ENCODE measurements at regions of chr9 and their contacts with region 1.

Region 1: DNA sequence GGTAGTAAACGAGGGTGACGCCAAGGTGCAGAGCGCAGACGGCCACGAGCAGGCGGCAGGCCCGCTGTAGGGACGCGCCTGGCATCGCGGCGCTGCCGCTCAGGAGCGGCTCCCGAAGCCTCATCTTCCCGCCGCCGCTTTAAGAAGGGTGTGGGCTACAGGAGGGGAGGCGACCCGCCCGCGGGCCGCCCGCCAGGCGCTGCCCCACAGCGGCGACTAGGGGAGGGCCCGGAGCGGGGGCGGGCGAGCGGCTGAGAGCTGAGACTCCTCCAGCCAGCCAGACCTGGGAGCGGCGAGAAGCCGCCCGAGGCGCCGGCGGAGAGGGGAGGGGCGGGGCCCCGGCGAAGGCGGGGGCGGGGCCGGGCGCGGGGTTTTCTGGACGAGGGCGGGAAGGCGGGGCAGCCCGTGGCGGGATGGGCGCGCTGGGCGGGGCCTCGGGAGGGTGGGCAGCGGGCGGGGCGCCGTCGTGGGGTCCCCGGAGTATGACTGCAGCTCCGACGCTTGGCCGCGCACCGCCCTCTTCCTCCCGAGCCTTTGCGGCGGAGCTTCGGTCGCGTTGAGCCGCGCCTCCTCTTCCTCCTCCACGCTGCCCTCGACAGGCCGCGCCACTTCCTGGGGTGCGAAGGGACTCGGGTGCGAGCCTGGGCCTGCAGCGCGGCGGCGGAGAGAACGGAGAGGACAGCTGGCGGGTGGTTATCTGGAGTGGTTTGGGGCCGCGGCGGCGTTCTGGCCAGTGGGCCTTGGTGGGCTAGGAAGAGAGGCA is at the start of gene B4GALT1:
- DNase-seq: peak; percentile 90 to 96 (median 95)
- H3K4me3 ChIP-seq: peak within 1 kb of the TSS; percentile 64 to 91 (median 75)
- H3K27ac ChIP-seq: peak within 1 kb of the TSS; percentile 64 to 89
- H3K4me1 ChIP-seq: peaks cover 23 to 61% (median 52%) of the 10 kb centered on the region in 4 experiments
- H3K27me3 ChIP-seq: no peaks in the 10 kb centered on the region

Region 2: DNA sequence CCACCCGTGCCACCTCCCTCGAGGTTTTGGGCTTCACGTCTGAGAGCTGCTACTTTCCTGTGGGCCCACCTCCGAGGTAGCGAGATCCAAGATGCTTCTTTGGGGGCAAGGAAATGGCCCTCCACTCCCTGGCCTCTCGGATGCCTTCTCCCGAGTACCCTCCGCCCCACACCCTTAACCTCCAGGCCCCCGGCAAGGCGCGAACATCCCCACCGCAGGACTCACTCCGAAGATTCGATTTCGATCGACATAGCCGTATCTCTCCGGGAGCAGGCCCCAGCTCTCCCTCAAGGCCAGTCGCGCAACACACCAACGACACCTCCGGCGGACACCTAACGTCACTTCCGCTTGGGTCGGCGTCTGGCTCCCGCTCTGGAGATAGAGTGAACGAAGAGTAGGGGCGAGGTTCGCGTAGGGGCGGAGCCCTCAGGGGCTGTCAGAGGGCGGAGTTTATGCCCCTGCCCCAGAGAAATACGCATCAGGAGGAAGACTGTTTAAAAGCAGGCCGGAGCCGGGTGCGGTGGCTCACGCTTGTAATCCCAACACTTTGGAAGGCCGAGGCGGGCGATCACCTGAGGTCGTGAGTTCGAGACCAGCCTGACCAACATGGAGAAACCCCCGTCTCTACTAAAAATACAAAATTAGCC is 90.7 kb before region 1 on chr9 and contains the start of gene SMU1:
- CTCF ChIA-PET with region 1: interaction called, 18 read pairs
- POLR2A ChIA-PET with region 1: interaction called, 8 read pairs
- DNase-seq: peak; percentile 98 to 99 (median 99)
- H3K4me3 ChIP-seq: peak within 1 kb of the TSS; percentile 72 to 99 (median 93)
- H3K27ac ChIP-seq: peak within 1 kb of the TSS; percentile 96 to 99
- H3K4me1 ChIP-seq: peaks cover 18 to 28% (median 24%) of the 10 kb centered on the region in 4 experiments
- H3K27me3 ChIP-seq: no peaks in the 10 kb centered on the region

Region 3: DNA sequence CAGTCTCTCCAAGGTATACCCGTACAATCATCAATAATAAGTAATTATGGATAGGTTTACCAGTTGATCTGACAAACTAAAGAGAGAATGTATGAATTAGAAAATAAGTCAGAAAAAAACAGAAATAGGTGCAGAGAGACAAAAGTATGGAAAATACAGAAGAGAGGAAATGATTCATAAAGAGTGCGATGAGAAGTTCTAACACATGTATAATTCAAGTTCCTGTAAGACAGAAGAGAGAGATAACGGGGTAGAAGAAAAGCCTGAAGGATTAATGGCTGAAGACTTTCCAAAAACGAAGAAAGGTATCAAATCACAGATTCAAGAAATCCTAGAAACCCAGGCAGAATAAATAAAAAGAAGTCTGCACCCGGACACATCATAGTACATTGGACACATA is 74.6 kb before region 1 on chr9:
- CTCF ChIA-PET with region 1: no interaction called
- POLR2A ChIA-PET with region 1: no interaction called
- DNase-seq: no peak
- H3K4me3 ChIP-seq: no peak overlapping the region
- H3K27ac ChIP-seq: no peak overlapping the region
- H3K4me1 ChIP-seq: no peaks in the 10 kb centered on the region
- H3K27me3 ChIP-seq: no peaks in the 10 kb centered on the region

Region 4: DNA sequence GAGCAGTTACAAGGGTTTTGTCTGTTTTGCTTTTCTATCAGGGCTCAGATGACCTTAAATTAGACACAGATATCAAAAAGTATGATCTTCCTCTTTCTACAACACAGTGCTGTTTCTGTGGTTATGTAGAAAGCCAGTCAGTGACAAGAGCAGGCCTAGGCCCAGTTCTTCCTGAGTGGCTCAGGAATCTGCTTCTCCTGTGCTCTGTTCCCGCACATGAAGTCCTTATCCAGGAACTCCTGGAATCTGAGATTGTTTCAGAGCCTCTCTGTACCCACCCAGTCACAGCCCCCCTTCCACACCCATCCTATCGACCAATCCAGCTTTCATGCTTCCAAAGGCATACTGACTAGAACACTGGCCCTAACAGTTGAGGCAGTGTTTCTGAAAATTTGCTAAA is 50.4 kb before region 1 on chr9:
- CTCF ChIA-PET with region 1: interaction called, 12 read pairs
- POLR2A ChIA-PET with region 1: no interaction called
- DNase-seq: peak in 2 of 3 donors; percentile 28 to 40
- H3K4me3 ChIP-seq: no peak overlapping the region
- H3K27ac ChIP-seq: peak overlapping the region in 1 of 2 experiments; percentile 64
- H3K4me1 ChIP-seq: peaks cover 4 to 22% (median 21%) of the 10 kb centered on the region in 4 experiments
- H3K27me3 ChIP-seq: no peaks in the 10 kb centered on the region

Region 5: DNA sequence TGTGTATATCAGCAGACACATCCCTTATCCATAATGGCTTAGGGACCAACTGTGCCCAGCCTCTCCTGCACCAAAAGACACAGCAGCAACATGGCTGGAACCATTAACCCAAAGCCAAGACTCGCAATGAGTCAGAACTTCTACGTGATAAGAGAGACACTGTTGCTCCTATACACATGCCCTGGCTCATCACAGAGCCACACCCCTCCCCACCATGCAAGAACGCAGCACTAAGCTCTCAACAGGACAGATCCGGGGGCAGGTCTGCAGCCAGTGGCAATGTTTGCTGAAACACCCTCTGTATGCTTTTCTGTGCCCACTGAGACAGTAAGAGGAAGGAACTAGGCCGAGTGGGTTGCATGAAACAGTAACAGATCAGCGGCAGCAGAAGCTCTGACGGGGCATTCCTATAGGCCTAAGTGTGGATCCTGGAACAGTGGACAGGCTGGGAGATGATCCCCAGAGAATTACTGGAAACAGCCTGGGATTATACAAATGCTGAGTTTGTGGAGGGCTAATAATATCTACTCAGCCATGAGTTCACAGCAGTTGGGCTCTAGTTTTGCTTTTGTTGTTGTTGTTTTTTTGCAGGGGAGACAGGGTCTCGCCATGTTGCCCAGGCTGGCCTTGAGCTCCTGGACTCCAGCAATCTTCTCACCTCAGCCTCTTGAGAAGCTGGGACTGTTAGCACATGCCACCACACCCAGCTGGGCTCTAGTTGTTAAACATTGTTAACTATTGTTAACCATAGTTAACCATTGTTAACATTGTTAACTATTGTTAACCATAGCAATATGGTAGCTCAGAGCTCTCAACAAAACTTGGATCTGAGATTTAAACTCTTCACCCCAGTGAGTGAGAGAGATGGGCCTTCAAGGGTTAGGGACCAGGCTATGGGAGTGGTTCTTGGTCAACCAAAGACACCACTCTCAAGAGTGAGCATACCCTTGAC is 41.1 kb before region 1 on chr9:
- CTCF ChIA-PET with region 1: interaction called, 14 read pairs
- POLR2A ChIA-PET with region 1: no interaction called
- DNase-seq: peak; percentile 45 to 76 (median 67)
- H3K4me3 ChIP-seq: peak overlapping the region in 1 of 7 experiments; percentile 41
- H3K27ac ChIP-seq: peak overlapping the region in 1 of 2 experiments; percentile 5
- H3K4me1 ChIP-seq: peaks cover 11 to 37% (median 26%) of the 10 kb centered on the region in 4 experiments
- H3K27me3 ChIP-seq: no peaks in the 10 kb centered on the region

Region 6: GRCh38 chr9:33202552-33203201 is 35.5 kb after region 1 on chr9:
- CTCF ChIA-PET with region 1: interaction called, 12 read pairs
- POLR2A ChIA-PET with region 1: no interaction called
- DNase-seq: peak; percentile 78 to 89 (median 85)
- H3K4me3 ChIP-seq: peak overlapping the region in 2 of 7 experiments; percentile 13 to 33
- H3K27ac ChIP-seq: no peak overlapping the region
- H3K4me1 ChIP-seq: peaks cover 0 to 11% (median 5%) of the 10 kb centered on the region in 4 experiments
- H3K27me3 ChIP-seq: no peaks in the 10 kb centered on the region

Region 7: DNA sequence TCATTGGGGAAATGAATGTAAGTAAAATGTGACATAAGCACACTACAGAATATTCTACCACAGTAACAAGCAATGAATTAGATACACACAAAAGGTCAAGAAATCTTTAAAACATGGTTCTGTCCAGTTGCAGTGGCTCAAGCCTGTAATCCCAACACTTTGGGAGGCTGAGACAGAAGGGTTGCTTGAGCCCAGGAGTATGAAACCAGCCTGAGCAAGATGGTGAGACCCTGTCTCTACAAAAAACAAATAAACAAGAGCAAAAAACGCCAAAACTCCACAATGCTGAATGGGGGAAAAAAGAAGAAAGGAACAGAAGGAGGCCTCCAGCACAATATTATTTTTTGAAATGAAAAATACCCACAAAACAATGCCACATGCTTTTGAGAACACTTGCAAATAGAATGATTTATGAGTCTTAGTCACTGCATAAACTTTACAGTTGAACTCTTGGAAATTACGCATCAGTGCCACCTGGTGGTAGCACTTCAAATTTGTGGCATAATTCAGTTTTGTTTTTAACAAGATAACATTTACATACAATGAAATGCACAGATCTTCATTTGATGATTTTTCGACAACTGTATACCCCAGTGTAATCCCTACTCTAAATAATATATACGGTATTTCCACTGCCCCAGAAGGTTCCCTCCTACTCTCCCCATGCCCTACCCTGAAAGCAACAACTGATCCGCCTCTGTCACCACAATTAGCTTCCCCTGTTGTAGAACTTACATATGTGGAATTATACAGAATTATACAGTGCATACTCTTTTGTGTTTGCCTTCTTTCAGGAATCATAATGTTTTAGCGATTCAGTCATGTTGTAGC is 58.3 kb after region 1 on chr9:
- CTCF ChIA-PET with region 1: interaction called, 16 read pairs
- POLR2A ChIA-PET with region 1: interaction called, 5 read pairs
- DNase-seq: peak; percentile 87 to 95 (median 93)
- H3K4me3 ChIP-seq: peak overlapping the region in 1 of 7 experiments; percentile 33
- H3K27ac ChIP-seq: peak overlapping the region in 1 of 2 experiments; percentile 12
- H3K4me1 ChIP-seq: peaks cover 9 to 42% (median 31%) of the 10 kb centered on the region in 4 experiments
- H3K27me3 ChIP-seq: no peaks in the 10 kb centered on the region

Measured in common myeloid progenitor, CD34-positive (primary cell).